ENCODE measurements at regions of chr3 and their contacts with region 1.

Region 1: DNA sequence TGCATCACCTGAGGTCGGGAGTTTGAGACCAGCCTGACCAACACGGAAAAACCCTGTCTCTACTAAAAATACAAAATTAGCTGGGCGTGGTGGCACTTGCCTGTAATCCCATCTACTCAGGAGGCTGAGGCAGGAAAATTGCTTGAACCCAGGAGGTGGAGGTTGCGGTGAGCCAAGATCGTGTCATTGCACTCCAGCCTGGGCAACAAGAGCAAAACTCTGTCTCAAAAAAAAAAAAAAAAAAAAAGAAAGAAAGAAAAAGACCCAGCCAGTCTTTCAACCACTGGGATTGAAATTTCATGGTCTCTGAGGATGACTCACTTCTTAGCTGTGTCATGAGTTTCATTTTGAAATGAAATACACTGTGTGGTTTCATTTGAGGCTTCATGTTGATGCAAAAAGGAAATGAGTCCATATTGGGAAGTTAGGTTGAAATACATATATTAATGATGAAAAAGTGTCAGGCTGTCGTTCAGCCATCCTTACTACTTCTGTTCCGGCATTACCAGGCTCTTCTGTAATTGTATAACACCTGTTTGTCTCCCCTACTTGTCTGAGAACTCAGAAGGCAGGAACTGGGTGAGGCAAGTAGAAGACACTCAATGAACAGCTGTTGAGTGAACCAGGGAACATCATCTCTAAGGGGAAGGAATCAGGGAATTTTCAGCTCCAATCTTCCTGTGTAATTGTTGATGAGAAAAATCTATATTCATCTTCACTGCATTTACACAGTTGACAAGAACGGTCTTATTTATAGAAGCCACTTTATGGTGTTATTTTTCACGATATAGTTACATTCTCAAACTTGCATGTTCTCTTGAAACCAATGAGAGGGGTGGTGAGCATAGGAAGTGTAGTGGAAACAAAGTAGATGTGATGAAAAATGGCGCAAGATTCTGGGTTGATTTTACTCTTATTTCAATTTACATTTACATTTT is 87.4 kb downstream of the NFKBIZ start:
- DNase-seq: peak in 8 of 9 donors; percentile 34 to 68 (median 58)
- ATAC-seq: peak; percentile 90
- H3K4me3 ChIP-seq: peak overlapping the region; percentile 9
- H3K4me3 Mint-ChIP-seq: peak overlapping the region in 9 of 10 donors; percentile 44 to 77 (median 72)
- H3K27ac ChIP-seq: no peak overlapping the region
- H3K27ac Mint-ChIP-seq: peak overlapping the region; percentile 76 to 91 (median 87)
- H3K4me1 ChIP-seq: peaks cover 28 to 56% of the 10 kb centered on the region in 2 donors
- H3K4me1 Mint-ChIP-seq: peaks cover 15 to 43% (median 30%) of the 10 kb centered on the region in 7 donors
- H3K27me3 ChIP-seq: no peaks in the 10 kb centered on the region
- H3K27me3 Mint-ChIP-seq: peaks cover 0 to 27% (median 0%) of the 10 kb centered on the region in 5 donors

Region 2: DNA sequence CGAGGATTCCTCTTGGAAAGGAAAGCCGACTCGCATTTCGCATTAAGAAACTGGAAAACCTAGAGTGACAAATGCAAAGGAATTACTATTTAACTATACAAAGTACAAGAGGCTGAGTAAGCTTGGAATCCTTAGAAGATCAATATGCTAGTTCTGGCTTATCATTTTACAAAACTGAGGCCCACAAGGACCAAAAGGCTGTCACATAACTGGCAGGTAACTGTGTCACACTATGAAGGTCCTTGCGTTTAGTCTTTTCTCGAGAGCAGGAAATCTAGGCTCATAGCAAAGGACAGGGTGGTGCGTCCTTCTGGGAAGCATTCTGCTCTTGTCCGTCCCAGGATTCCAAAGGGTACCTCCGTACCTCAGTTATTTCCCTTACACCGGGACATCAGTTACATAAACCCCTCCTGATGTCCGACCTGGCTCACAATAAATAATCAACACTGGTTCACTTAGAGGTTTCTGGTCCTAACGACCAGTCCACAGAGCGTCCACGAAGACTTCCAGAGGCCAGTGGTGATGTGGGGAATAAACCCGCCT is 250.7 kb before region 1 on chr3:
- CTCF ChIA-PET with region 1: no interaction called
- POLR2A ChIA-PET with region 1: no interaction called
- intact Hi-C with region 1: loop called in 1 of 2 experiments (anchors 5 kb)
- DNase-seq: peak in 2 of 9 donors; percentile 21 to 24
- ATAC-seq: peak; percentile 1
- H3K4me3 ChIP-seq: peak overlapping the region; percentile 72
- H3K4me3 Mint-ChIP-seq: peak overlapping the region; percentile 90 to 100 (median 98)
- H3K27ac ChIP-seq: peak overlapping the region; percentile 92
- H3K27ac Mint-ChIP-seq: peak overlapping the region; percentile 94 to 100 (median 99)
- H3K4me1 ChIP-seq: peaks cover 24 to 25% of the 10 kb centered on the region in 2 donors
- H3K4me1 Mint-ChIP-seq: peaks cover 20 to 58% (median 41%) of the 10 kb centered on the region in 7 donors
- H3K27me3 ChIP-seq: no peaks in the 10 kb centered on the region
- H3K27me3 Mint-ChIP-seq: no peaks in the 10 kb centered on the region

Region 3: DNA sequence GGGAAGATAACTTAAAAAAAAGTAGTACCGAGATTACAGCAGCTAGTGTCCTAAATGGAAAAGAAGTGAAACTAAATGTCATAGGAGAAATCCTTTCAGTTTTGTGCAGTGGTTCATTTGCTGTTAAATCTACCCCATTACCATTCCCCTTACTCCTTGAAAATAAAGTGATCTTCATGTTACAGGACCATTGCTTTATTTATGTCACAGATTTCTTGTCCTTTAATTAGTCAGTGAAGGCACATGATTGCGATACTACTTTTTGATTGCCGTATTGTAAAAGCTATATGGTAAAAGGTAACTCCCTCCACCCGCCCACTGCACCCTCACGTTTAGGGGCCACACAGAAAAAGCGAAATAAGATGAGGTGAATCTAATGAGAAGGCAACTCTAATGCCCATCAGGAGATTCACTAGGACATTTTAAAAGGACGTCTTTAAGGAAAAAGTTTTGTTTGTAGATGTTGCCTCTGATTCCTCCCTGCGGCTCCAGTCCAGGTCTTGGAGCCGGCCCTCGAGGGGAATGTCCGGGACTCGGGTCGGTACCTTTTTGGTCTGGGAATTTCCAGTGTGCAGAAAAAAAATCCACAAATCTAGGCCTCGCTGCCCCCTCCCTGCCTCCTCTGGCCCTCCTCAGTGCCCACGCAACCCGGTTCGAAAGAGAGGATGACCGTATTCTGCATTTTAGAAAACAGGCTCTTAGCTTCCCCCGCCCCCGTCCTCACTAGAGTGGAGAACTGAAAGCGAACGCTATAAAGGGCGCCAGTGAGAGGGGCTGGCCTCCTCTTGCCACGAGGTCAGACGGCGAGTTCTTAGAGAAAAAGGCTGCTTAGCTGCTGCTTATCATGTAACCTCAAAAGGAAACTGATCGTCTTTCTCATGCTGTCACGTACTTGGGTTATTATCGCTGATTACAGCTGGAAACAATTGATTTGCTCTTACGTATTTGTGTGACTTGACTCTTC is 109.2 kb before region 1 on chr3:
- CTCF ChIA-PET with region 1: no interaction called
- POLR2A ChIA-PET with region 1: interaction called, 5 read pairs
- intact Hi-C with region 1: loop called in 1 of 2 experiments (anchors 2 kb)
- DNase-seq: peak; percentile 52 to 86 (median 73)
- ATAC-seq: peak; percentile 86
- H3K4me3 ChIP-seq: peak overlapping the region; percentile 66
- H3K4me3 Mint-ChIP-seq: peak overlapping the region; percentile 85 to 97 (median 95)
- H3K27ac ChIP-seq: peak overlapping the region; percentile 88
- H3K27ac Mint-ChIP-seq: peak overlapping the region; percentile 94 to 99 (median 97)
- H3K4me1 ChIP-seq: peaks cover 13 to 28% of the 10 kb centered on the region in 2 donors
- H3K4me1 Mint-ChIP-seq: peaks cover 31 to 76% (median 63%) of the 10 kb centered on the region in 7 donors
- H3K27me3 ChIP-seq: no peaks in the 10 kb centered on the region
- H3K27me3 Mint-ChIP-seq: no peaks in the 10 kb centered on the region

Region 4: DNA sequence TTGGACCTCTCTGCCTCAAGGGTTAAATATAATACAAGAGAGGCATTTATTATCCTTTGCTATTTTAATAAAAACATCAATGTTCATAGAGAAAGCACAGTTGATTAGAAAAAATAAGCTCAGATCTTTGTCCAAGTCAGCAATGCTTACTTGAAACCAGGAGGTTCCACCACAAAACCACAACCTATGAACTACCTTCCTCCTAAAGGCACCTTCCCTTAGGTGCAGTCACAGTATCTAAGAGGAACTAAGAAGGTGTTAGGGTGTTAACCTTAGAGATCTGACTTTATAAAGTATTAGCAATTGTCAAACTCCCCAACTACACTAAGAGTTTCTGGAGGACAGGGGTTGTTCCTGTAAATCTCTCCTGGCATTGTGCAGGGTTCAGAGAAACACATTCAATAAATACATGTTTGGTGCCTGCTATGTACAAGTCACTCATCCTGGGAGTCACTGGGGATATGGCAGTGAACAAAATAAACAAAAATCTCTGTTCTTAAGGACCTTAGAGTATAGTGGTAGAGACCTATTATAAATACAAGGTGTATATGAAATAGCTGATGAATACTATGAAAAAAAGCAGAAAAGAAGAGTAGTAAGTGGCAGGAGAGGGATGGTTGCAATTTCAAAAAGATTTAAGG is 121.2 kb after region 1 on chr3:
- CTCF ChIA-PET with region 1: interaction called, 3 read pairs
- POLR2A ChIA-PET with region 1: interaction called, 5 read pairs
- intact Hi-C with region 1: loop called in 1 of 2 experiments (anchors 2 kb)
- DNase-seq: peak in 7 of 9 donors; percentile 57 to 82 (median 72)
- ATAC-seq: peak; percentile 96
- H3K4me3 ChIP-seq: peak overlapping the region; percentile 5
- H3K4me3 Mint-ChIP-seq: peak overlapping the region; percentile 23 to 74 (median 44)
- H3K27ac ChIP-seq: peak overlapping the region; percentile 44
- H3K27ac Mint-ChIP-seq: peak overlapping the region; percentile 68 to 91 (median 84)
- H3K4me1 ChIP-seq: peaks cover 27 to 30% of the 10 kb centered on the region in 2 donors
- H3K4me1 Mint-ChIP-seq: peaks cover 26 to 56% (median 46%) of the 10 kb centered on the region in 7 donors
- H3K27me3 ChIP-seq: no peaks in the 10 kb centered on the region
- H3K27me3 Mint-ChIP-seq: no peaks in the 10 kb centered on the region

Region 5: DNA sequence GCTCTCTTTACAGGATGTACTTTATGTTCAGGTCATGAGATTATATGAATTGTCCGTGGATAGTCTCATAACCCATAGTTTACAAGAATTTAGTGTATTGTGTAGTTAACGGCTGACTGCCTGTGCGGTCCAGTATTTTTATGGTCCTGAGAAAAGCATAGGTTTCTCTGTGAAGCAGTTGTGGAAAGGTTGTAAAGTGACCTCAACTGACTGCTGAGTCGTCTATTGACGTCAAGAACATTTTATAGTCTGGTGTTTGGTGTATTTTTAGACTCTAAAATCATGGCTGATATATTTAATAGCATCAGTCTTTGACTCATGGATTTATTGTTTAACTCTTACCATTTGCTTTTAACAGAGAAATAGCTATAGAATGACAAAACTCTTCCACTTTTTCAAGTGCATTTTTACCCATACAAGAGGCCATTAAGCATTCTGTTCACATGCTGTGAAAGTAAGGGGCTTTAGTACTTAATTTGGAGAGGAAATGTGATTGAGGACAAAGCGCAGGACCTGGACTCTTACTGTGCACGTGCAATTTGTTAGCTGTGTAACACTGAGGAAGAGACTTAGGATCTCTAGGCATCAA is 153.3 kb after region 1 on chr3:
- CTCF ChIA-PET with region 1: no interaction called
- POLR2A ChIA-PET with region 1: no interaction called
- intact Hi-C with region 1: loop called in 1 of 2 experiments (anchors 2 kb)
- DNase-seq: no peak
- ATAC-seq: no peak
- H3K4me3 ChIP-seq: no peak overlapping the region
- H3K4me3 Mint-ChIP-seq: no peak overlapping the region
- H3K27ac ChIP-seq: no peak overlapping the region
- H3K27ac Mint-ChIP-seq: no peak overlapping the region
- H3K4me1 ChIP-seq: peaks cover 0 to 13% of the 10 kb centered on the region in 2 donors
- H3K4me1 Mint-ChIP-seq: peaks cover 12 to 51% (median 30%) of the 10 kb centered on the region in 7 donors
- H3K27me3 ChIP-seq: no peaks in the 10 kb centered on the region
- H3K27me3 Mint-ChIP-seq: peaks cover 0 to 5% (median 0%) of the 10 kb centered on the region in 5 donors